PC-9 (cell line): ENCODE measurements at regions of chr2 and their contacts with region 1.

Region 1: DNA sequence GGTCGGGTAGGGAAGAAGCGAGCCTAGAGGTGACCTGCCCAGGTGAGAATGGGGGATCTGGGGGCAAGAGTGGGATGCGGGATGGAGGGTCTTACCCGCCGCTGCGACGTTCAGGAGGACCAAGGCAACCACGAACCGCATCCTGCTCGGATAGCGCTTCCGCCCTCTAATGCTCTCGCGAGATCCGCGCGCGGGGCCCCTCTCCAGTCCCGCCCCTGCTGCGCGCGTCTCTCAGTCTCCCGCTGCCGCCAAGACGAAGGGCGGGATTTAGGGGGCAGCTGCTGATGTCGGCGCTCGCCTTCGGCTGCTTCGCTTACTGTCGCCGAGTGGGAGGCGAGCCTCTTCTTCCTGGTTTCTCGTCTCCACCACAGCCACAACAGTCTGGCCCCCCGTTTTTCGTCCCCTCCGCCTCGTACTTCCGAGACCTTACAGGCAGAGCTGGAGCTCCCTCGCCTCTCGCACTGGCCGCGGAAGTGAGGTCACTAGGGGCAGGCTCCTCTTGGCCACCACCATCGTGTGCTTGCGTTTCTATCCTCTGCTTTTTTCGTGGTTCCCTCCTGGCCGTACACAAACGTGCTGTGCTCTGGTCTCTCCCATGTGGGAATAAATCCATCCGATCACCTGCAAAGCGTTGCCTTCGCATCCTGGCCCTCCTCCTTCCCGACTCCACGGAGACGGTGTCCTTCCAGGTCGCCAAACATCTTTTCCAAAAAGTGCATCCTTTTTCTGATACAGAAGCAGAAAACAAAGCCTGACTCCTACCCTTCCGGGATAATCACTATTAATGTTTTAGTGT is at the start of gene TGOLN2:
- DNase-seq: peak; percentile 75 to 85
- H3K4me3 ChIP-seq: peak within 1 kb of the TSS; percentile 93
- H3K27ac ChIP-seq: peak within 1 kb of the TSS; percentile 68
- H3K4me1 ChIP-seq: peaks cover 30% of the 10 kb centered on the region
- H3K27me3 ChIP-seq: no peaks in the 10 kb centered on the region
- CTCF ChIP-seq: no peak; the same call in 1 of the 2 replicates
- total RNA-seq, gene TGOLN2: 86.1 and 87.2 TPM in 2 replicates

Region 2: DNA sequence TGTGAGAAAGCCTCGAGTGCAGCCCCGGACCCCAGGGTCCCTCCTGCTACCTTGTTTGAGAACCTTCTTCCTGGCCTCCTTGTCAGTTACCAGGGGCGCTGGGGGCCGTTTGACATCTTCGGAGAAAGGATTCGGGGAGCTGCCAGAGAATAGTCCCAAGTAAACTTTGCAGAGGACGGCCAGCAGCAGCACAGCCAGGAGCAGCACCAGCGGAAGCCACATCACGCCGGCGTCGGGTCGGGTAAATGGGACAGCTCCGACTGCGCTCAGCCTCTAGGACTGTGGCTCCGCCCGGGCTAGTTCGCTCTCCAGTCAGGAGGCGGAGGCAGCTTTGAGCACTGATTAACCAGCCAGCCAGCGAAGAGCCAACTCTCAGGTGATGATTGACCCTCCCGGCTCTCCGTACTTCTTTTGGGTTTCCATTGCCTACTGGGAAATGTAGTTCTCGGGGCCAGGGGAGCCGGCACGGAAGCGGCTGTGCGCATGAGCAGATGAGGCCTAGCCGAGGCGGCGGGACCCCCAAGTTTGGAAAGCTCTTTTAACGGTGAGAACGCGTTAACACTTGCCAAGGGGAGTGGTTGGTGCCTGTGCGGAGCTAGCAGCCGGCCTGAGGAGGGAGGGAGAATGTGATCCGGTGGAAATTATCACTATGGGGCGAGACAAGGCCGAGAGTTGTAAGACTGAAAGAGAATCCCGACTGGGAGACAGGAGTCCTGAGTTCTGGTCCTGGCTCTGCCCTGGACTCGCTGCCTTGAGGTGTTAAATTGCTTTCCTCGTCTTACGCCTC is 26.5 kb after region 1 on chr2 and contains the starts of genes ELMOD3 and RETSAT:
- CTCF ChIA-PET with region 1: interaction called, 3 read pairs
- POLR2A ChIA-PET with region 1: interaction called, 21 read pairs
- intact Hi-C with region 1: loop called (anchors 2 kb)
- DNase-seq: peak; percentile 96
- H3K4me3 ChIP-seq: peak within 1 kb of the TSS; percentile 87
- H3K27ac ChIP-seq: peak within 1 kb of the TSS; percentile 62
- H3K4me1 ChIP-seq: peaks cover 16% of the 10 kb centered on the region
- H3K27me3 ChIP-seq: no peaks in the 10 kb centered on the region
- CTCF ChIP-seq: no peak
- total RNA-seq, gene ELMOD3: 16.4 and 18.1 TPM in 2 replicates
- total RNA-seq, gene RETSAT: 52.1 and 57.8 TPM in 2 replicates

Region 3: DNA sequence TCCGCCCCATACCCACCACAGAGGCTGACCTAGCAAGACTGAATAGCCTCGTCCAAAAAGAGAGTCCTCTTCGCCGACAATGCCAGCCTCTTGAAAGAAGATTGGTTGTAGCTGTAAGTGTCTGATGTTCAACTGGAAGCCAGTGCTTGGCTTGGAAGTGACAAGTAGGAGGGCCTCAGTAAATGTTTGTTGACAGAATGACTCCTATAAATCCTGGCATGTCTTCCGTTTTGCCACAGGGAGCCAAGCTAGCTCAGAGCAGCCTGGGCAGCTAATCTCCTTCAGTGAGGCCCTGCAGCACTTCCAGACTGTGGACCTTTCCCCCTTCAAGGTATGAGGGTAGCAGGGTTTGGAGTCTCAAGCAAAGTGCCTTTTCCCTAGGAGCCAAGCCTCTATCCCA is 41.5 kb after region 1 on chr2:
- CTCF ChIA-PET with region 1: no interaction called
- POLR2A ChIA-PET with region 1: interaction called, 11 read pairs
- intact Hi-C with region 1: no loop called
- DNase-seq: no peak
- H3K4me3 ChIP-seq: no peak overlapping the region
- H3K27ac ChIP-seq: no peak overlapping the region
- H3K4me1 ChIP-seq: no peaks in the 10 kb centered on the region
- H3K27me3 ChIP-seq: no peaks in the 10 kb centered on the region
- CTCF ChIP-seq: no peak

Region 4: DNA sequence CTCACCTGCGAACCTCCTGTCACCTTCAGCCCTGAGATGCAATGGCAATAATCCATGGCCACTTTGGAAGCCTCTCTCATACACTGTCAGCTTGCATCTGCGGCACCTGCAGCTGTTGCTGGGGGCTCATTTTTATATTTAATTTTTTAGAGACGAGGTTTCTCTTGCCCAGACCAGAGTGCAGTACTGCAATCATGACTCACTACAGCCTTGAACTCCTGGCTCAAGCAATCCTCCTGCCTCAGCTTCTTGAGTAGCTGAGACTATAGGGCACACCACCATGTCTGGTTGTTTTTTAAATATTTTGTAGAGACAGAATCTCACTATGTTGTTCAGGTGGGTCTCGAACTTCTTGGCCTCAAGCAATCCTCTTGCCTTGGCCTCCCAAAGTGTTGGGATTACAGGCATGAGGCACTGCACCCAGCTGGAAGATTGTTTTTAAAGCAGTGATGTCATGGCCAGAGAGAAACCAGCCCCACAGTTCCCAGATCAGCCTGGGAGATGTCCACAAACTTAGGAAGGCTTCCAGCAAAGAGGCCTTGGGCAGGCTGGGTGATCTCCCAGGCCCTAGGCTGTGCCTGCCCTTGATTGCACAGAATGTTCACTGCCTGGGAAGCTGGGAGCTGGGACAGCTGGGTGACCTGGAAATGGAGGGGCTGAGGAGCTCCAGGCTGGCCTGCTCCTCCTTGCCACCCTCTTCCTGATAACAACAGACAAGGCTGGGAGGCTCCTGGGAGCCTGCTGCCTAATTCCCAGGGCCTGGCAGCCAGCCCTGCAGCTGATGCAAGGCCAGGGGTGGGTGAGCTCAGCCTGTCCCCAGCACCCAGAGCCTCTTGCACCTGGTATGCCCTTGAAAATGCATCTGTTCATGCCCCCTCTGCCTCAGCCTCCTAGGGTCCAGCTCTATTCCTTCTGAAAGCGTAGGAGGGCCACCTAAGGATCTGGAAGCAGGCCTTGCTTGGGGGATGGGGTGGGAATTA is 117.6 kb after region 1 on chr2:
- CTCF ChIA-PET with region 1: no interaction called
- POLR2A ChIA-PET with region 1: interaction called, 43 read pairs
- intact Hi-C with region 1: no loop called
- DNase-seq: peak; percentile 55 to 65
- H3K4me3 ChIP-seq: no peak overlapping the region
- H3K27ac ChIP-seq: peak overlapping the region; percentile 91
- H3K4me1 ChIP-seq: peaks cover 25% of the 10 kb centered on the region
- H3K27me3 ChIP-seq: no peaks in the 10 kb centered on the region
- CTCF ChIP-seq: no peak